Activated CD4-positive, alpha-beta memory T cell treated with anti-CD3 and anti-CD28 coated beads, Interleukin-2, amount 10 ng/mL, durations not matched to agents 7 days and 5 days (primary cell): ENCODE measurements at regions of chr17 and their contacts with region 1.

Region 1: DNA sequence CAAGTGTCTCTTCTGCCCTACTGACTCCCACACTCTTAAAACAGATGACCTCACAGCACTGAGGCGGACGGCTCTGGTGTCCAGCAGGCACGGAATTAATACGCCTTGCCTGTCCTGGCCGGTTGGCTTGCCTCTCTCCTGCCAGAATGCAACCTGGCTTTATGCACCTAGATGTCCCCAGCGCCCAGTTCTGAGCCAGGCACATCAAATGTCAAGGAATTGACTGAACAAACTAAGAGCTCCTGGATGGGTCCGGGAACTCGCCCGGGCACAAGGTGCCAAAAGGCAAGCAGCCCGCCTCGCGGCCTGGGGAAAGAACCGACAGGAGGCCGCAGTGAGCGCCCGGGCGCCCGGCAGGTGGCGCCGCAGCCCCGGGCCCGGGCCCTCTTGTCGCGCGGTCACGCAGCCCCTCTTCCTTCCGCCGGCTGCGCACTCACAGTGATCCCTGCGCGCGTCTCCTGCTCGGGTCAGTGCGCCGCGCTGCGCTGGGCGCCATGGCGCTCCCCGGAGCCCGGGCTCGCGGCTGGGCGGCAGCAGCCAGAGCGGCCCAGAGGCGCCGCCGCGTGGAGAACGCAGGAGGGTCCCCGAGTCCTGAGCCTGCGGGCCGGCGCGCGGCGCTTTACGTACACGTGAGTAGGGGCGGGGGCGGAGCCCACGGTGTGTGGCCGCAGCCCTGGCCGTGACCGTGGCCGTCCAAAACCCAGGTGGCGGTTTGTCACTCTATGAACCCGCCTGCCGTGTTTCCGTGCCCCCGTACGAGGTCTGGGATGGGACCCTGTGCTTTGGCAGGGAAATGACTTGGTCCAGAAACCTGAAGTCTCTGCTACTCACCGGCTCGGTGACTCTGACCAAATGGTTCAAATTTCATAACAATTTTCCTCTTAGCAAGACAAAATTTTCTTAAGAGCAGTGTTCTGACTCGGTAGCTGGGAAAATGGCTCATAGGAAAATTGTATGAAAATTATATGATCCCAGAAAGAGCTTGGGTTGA is at the start of gene RSAD1:
- DNase-seq: peak; percentile 90
- H3K4me3 Mint-ChIP-seq: peak within 1 kb of the TSS; percentile 82
- H3K27ac Mint-ChIP-seq: peak within 1 kb of the TSS; percentile 68
- H3K4me1 Mint-ChIP-seq: peaks cover 25% of the 10 kb centered on the region
- H3K27me3 Mint-ChIP-seq: peaks cover 3% of the 10 kb centered on the region
- total RNA-seq, gene RSAD1: 24.5 to 28.4 TPM

Region 2: GRCh38 chr17:50128441-50129352 is 350.0 kb before region 1 on chr17:
- CTCF ChIA-PET with region 1: no interaction called
- POLR2A ChIA-PET with region 1: no interaction called
- DNase-seq: no peak
- H3K4me3 Mint-ChIP-seq: peak overlapping the region; percentile 38
- H3K27ac Mint-ChIP-seq: no peak overlapping the region
- H3K4me1 Mint-ChIP-seq: peaks cover 36% of the 10 kb centered on the region
- H3K27me3 Mint-ChIP-seq: peaks cover 37% of the 10 kb centered on the region

Region 3: DNA sequence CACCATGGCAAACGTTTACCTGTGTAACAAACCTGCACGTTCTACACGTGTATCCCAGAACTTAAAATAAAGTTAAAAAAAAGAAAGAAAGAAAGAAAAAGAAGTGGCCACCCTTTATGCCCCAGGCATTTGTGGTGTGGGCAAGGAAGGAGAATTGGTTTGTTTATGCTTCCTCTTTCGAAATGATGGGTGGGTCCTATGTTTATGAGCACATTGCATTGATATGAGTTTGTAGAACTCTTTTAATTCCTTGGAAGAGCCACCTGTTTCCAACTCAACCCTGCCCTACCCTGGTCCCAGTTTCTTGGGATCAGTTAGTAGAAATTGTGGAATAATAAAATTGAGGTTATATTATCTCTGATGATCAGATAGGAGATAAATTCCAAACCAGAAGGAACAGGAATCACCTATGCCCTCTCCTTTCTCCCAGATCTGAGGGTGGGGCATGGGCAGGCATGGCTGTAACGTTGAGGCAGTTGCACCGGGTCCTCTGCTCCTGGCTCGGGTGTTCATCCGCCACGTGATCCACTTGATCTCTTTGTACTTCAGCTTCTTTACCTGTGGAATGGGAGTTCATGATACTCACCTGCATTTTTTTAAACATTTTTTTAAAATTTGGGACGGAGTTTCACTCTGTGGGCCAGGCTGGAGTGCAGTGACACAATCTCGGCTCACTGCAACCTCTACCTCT is 25.9 kb before region 1 on chr17:
- CTCF ChIA-PET with region 1: no interaction called
- POLR2A ChIA-PET with region 1: no interaction called
- DNase-seq: no peak
- H3K4me3 Mint-ChIP-seq: no peak overlapping the region
- H3K27ac Mint-ChIP-seq: no peak overlapping the region
- H3K4me1 Mint-ChIP-seq: peaks cover 10% of the 10 kb centered on the region
- H3K27me3 Mint-ChIP-seq: no peaks in the 10 kb centered on the region

Region 4: DNA sequence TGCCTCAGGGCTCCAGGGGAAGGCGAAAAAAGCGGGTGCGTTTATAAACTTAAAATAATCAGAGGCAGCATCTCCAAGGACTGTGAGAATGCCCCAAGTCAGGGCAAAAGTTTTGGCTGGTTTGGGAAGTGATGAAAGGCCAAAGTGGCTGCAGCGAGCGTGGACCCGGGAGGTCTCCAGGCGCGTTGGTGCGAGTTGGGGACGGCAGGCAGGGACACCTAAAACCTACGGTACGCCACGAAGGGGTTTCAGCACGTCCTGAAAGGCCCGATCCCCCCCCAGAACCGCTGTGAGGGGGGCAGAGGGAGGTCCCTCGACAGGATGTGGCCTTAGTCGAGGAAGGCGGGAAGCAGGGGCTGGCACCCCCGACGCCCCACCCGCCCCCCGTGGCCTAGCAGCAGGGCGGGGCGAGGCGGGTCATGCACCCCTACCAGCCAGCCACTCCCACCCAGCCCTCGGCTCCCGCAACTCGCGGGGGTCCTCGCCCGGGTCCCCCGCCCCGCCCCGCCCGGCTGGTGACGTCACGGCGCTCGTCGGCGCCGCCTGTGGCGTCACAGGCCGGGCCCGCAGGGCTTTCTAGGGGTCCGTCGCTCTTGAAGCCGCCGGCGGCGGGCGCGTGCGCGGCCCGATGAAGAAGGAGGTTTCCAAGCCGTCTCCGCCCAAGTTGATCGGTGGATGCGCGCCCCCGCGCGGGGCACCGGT is 29.3 kb after region 1 on chr17 and contains the start of gene MYCBPAP:
- CTCF ChIA-PET with region 1: interaction called, 23 read pairs
- POLR2A ChIA-PET with region 1: interaction called, 10 read pairs
- DNase-seq: peak; percentile 89
- H3K4me3 Mint-ChIP-seq: peak within 1 kb of the TSS; percentile 94
- H3K27ac Mint-ChIP-seq: peak within 1 kb of the TSS; percentile 84
- H3K4me1 Mint-ChIP-seq: peaks cover 65% of the 10 kb centered on the region
- H3K27me3 Mint-ChIP-seq: no peaks in the 10 kb centered on the region
- total RNA-seq, gene MYCBPAP: 13.4 to 15.2 TPM

Region 5: DNA sequence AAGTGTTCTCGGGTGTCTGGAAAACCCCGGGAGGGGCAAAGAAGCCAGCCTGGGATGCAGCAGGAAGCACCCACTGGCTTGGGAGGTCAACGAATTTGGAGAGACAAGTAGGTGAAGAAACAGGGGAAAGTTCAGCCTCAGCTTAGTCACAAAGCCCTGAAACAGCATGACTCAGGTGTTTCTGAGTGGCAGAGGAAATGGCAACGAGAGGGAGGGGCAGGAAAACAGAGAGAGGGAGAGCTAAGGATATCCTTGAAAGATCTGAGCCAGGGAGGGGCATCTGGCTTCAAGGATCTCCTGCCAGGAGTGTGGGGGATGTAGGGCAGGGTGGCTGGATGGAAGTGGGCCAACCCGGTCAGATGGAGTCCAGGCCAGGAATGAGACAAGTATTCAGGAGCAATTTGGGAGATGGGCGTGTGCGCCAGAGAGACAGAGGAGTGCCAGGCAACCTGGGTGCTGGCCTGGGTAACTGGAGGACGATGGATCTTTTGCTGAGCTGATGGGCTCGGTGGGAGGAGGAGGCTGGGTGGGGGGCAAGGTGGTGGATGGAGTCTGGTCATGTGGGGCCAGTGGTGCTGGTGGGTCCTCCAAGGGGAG is 183.2 kb after region 1 on chr17:
- CTCF ChIA-PET with region 1: no interaction called
- POLR2A ChIA-PET with region 1: no interaction called
- DNase-seq: peak; percentile 64
- H3K4me3 Mint-ChIP-seq: peak overlapping the region; percentile 29
- H3K27ac Mint-ChIP-seq: peak overlapping the region; percentile 85
- H3K4me1 Mint-ChIP-seq: peaks cover 32% of the 10 kb centered on the region
- H3K27me3 Mint-ChIP-seq: peaks cover 7% of the 10 kb centered on the region